PC-9 (cell line): ENCODE measurements at regions of chr9 and their contacts with region 1.

Region 1: GRCh38 chr9:21408817-21409216 is at the start of gene IFNA8:
- DNase-seq: no peak
- H3K4me3 ChIP-seq: no peak within 1 kb of the TSS
- H3K27ac ChIP-seq: no peak within 1 kb of the TSS
- H3K4me1 ChIP-seq: no peaks in the 10 kb centered on the region
- H3K27me3 ChIP-seq: no peaks in the 10 kb centered on the region
- CTCF ChIP-seq: no peak
- total RNA-seq, gene IFNA8: not detected in 2 replicates

Region 2: DNA sequence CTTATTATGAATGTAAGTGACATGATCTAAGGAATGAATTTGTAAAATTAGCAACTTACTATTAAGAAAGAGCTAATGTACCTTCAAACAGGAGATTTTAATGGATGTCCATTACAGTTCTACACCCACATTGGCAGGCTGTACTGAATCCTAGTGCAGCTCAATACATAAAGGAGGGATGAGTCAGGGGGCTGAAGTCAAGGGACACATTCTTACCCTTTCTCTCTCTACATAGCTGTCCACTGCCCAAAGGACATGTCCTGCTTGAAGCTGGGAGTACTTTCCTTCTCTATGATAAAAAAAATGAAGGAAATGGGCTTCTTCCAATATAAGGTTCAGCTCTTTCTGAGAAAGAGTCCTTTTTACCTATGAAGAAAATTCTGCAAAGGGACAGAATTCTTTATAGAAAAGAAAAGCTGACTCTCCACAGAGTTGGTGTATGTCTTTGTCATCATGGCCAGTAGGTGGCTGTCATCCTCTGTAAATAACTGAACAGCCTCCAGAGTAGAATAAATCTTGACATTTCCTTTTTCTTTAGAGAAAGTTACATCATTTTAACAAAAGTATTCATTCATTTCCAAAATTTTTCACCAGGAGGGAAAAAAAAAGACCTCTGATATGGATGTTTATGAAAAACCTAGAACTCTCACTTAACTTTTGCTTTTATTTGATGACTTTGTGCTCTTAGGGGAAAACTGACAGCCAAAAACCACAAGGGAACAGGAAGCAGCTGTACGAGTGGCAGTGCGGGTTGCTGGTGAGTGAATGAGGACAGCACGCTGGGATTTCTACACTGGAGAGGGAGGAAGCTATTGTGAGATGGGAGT is 155.9 kb before region 1 on chr9:
- CTCF ChIA-PET with region 1: no interaction called
- POLR2A ChIA-PET with region 1: no interaction called
- intact Hi-C with region 1: loop called (anchors 5 kb)
- DNase-seq: peak in 1 of 2 experiments; percentile 5
- H3K4me3 ChIP-seq: no peak overlapping the region
- H3K27ac ChIP-seq: no peak overlapping the region
- H3K4me1 ChIP-seq: no peaks in the 10 kb centered on the region
- H3K27me3 ChIP-seq: no peaks in the 10 kb centered on the region
- CTCF ChIP-seq: peak; percentile 74

Region 3: GRCh38 chr9:21334701-21335632 is 73.8 kb before region 1 on chr9 and contains the start of gene KLHL9:
- CTCF ChIA-PET with region 1: no interaction called
- POLR2A ChIA-PET with region 1: no interaction called
- intact Hi-C with region 1: no loop called
- DNase-seq: peak; percentile 65 to 81
- H3K4me3 ChIP-seq: peak within 1 kb of the TSS; percentile 92
- H3K27ac ChIP-seq: peak within 1 kb of the TSS; percentile 94
- H3K4me1 ChIP-seq: peaks cover 20% of the 10 kb centered on the region; the same call in 1 of the 2 replicates
- H3K27me3 ChIP-seq: no peaks in the 10 kb centered on the region
- CTCF ChIP-seq: no peak
- total RNA-seq, gene KLHL9: 9.1 and 10.5 TPM in 2 replicates

Region 4: DNA sequence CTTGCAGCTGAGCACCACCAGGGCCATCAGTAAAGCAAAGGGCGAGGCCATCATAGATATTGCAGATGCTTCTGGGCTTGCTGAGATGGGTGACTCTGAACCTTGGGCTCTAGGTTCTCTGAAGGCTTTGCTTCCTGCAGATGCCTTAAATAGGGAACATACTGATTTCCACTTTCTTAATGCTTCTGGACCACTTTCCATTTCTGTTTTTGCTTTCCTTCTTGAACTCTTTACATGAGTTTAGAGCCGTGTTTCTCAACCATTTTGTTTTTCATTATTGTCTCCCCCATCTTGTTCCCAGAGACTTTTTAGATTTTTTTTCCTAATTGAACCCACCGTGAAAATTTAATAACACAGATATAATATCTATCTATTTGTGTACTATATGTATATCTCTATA is 40.9 kb before region 1 on chr9 and contains the start of gene IFNA13:
- CTCF ChIA-PET with region 1: no interaction called
- POLR2A ChIA-PET with region 1: no interaction called
- intact Hi-C with region 1: no loop called
- DNase-seq: no peak
- H3K4me3 ChIP-seq: no peak within 1 kb of the TSS
- H3K27ac ChIP-seq: no peak within 1 kb of the TSS
- H3K4me1 ChIP-seq: no peaks in the 10 kb centered on the region
- H3K27me3 ChIP-seq: no peaks in the 10 kb centered on the region
- CTCF ChIP-seq: no peak
- total RNA-seq, gene IFNA13: not detected in 2 replicates